Mammary epithelial cell (primary cell): ENCODE measurements at regions of chr19 and their contacts with region 1.

Region 1: DNA sequence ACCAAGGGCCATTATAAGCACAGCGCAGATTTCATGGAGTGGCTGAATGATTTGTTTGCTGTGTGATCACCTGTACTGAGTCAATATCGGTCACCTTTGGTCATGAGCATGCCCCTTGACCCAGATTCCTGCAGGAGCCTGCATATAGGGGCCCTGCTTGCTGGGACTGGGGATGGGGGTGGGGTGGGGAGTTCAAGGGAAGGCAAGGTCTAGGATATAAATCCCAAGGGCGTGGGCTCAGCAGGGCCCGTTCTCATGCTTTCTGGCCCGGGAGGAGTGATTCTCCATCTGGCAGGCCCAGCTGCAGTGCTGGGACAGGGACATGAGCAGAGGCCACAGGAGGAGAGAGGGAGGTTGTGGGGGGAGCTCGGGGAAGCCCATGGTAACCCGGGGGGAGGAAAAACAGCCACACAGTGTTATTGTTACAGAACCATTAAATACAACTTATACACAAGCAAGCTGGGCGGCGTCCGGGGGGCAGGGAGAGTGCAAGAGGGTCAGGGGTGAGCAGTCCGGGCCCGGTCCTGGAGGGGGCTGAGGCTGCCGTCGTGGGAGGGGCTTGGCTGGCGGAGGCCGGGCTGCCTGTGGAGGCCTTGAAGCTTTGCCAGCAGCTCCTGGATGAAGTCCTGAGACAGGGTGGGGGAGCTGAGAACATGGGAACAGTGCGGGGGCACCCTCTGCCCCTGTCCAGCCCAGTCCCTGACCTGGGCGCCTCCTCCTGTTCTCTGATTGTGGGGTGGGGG is 5.2 kb downstream of the PPP1R14A start:
- DNase-seq: no peak
- H3K4me3 ChIP-seq: peak overlapping the region in 2 of 3 experiments; percentile 14 to 17
- H3K27ac ChIP-seq: no peak overlapping the region
- H3K4me1 ChIP-seq: peaks cover 25% of the 10 kb centered on the region
- H3K27me3 ChIP-seq: no peaks in the 10 kb centered on the region
- CTCF ChIP-seq: no peak

Region 2: DNA sequence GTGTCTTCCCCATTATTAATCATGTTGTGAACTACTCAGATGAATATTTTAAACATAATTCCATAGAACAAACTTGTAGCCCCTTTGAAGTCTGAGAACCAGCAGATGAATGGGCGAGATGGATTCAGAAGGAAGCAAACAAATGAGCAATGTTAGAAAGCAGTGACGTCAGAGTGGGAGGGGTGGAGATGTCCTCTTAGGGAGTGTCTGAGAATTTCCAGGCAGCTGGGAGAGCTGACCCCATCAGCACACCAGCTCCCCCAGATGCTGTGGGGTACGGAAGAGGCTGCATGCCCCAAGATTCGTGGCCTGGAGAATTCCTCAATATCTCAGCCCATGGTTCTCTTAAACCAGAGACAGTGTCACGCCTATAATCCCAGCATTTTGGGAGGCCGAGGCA is 95.5 kb before region 1 on chr19:
- CTCF ChIA-PET with region 1: no interaction called
- dilution Hi-C with region 1: no loop called
- in situ Hi-C with region 1: no loop called
- intact Hi-C with region 1: no loop called
- DNase-seq: peak; percentile 23
- H3K4me3 ChIP-seq: no peak overlapping the region
- H3K27ac ChIP-seq: no peak overlapping the region
- H3K4me1 ChIP-seq: no peaks in the 10 kb centered on the region
- H3K27me3 ChIP-seq: no peaks in the 10 kb centered on the region
- CTCF ChIP-seq: no peak

Region 3: GRCh38 chr19:38216785-38217641 is 34.0 kb before region 1 on chr19:
- CTCF ChIA-PET with region 1: no interaction called
- dilution Hi-C with region 1: loop called (anchors 5 kb)
- in situ Hi-C with region 1: no loop called
- intact Hi-C with region 1: no loop called
- DNase-seq: no peak
- H3K4me3 ChIP-seq: no peak overlapping the region
- H3K27ac ChIP-seq: no peak overlapping the region
- H3K4me1 ChIP-seq: peaks cover 13% of the 10 kb centered on the region
- H3K27me3 ChIP-seq: no peaks in the 10 kb centered on the region
- CTCF ChIP-seq: no peak